IMR-90 (cell line): ENCODE measurements at regions of chr5 and their contacts with region 1.

Region 1: GRCh38 chr5:8829323-8830029 is 716.4 kb downstream of the SEMA5A start:
- DNase-seq: peak; percentile 100
- ATAC-seq: peak; percentile 89
- H3K4me3 ChIP-seq: no peak overlapping the region
- H3K27ac ChIP-seq: peak overlapping the region; percentile 75
- H3K4me1 ChIP-seq: peaks cover 25% of the 10 kb centered on the region
- H3K27me3 ChIP-seq: no peaks in the 10 kb centered on the region
- CTCF ChIP-seq: no peak
- POLR2A ChIP-seq: no peak
- RAD21 ChIP-seq: 0 out of 2 replicates have a peak, but pooled peaks have one; percentile 1

Region 2: DNA sequence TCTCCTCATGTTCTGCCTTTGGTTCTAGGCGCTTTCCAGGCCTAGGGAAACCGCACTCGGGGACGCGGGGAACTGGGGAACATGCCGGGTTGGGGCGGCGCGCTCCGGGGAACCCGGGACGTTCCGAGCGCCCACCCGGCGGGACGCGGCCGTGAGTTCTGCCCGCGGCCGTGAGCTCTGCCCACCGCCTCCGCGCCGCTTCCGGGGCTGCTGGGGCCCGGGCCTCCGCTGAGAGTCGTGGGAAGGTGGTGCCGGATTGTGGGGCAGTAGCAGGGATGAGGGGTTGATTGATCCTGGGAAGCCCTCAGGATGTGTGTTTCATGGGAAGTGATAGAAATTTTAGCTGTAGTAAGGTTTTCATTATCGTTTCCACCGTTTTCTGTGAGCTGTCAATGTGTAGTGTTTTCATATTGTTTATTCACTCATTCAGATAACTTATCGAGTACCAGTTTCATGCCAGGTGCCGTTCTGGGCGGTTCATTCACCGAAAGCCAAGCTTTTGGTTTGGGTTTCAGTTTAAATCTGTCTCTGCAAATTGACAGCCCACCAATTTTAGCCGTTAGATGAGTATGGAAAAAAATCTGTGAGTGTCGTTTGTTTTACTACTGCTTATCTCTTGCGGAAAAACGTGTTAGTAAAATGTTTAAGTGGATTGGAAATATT is 959.9 kb before region 1 on chr5:
- CTCF ChIA-PET with region 1: no interaction called
- POLR2A ChIA-PET with region 1: no interaction called
- dilution Hi-C with region 1: no loop called
- in situ Hi-C with region 1: no loop called
- intact Hi-C with region 1: loop called (anchors 10 kb)
- DNase-seq: no peak
- ATAC-seq: peak; percentile 47
- H3K4me3 ChIP-seq: peak overlapping the region; percentile 59
- H3K27ac ChIP-seq: peak overlapping the region; percentile 52; the same call in 1 of the 2 replicates
- H3K4me1 ChIP-seq: 0 out of 2 replicates have a peak, but pooled peaks cover 2% of the 10 kb centered on the region
- H3K27me3 ChIP-seq: no peaks in the 10 kb centered on the region
- CTCF ChIP-seq: no peak
- POLR2A ChIP-seq: no peak
- RAD21 ChIP-seq: no peak

Region 3: DNA sequence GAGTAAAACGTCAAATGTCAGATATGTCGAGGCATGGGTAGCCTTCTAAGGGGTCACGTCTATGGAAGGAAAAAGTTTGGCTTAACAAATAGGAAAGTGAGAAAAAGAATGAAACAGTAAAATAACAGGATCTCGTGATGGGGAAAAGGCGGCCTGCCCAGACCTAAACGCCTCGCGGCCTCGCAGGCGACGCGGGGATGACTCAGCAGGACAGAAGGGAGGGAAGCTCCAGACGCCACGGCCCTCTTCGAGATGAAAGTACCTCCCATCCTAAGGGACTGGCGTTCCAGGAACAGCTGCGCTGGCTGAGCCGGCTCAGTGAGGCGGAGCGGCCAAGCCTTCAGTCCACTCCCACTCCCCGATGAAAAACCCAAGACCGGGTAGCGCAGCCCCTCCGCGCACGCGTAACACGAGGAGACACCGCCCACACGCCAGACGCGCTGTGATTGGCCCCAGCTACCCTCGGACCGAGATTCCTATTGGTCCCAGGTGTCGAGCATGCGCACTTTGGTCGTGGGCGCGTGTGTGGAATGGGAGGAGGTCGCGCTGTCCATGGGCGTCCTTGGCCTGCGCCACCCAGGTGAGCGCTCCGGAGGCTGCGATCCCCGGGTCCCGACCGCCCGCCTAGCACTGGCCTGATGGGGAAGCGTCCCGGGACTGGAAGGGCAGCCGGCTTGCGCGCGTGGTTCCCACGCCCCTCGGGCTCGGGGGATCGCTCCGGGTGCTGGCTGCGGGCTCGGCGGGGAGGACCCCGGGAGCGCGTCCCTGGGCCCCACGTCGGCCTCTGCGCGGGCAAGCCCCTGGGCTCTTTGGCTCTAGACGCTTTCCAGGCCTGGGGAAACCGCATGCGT is 372.1 kb before region 1 on chr5:
- CTCF ChIA-PET with region 1: no interaction called
- POLR2A ChIA-PET with region 1: no interaction called
- dilution Hi-C with region 1: no loop called
- in situ Hi-C with region 1: no loop called
- intact Hi-C with region 1: loop called (anchors 5 kb)
- DNase-seq: peak; percentile 98
- ATAC-seq: peak; percentile 98
- H3K4me3 ChIP-seq: peak overlapping the region; percentile 82
- H3K27ac ChIP-seq: peak overlapping the region; percentile 71
- H3K4me1 ChIP-seq: 0 out of 2 replicates have a peak, but pooled peaks cover 2% of the 10 kb centered on the region
- H3K27me3 ChIP-seq: no peaks in the 10 kb centered on the region
- CTCF ChIP-seq: no peak
- POLR2A ChIP-seq: peak; percentile 76
- RAD21 ChIP-seq: no peak

Region 4: DNA sequence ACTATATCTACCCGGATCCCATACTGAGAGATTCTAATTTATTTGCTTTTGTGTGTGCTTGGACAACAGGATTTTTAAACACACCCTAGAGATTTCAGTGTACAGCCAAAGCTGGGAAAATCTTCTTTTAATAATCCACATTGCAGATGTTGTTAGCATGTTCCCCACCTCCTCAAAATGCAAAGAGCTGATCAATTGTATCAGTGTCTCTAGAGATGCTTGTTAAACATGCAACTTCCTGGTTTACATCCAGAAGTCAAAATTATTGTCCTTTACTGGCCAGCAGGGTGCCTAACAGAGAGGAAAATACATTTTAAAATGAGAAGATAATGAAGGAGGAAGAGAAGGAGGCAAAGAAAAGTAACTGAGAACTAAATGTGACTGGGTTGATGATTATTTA is 76.9 kb before region 1 on chr5:
- CTCF ChIA-PET with region 1: no interaction called
- POLR2A ChIA-PET with region 1: no interaction called
- dilution Hi-C with region 1: no loop called
- in situ Hi-C with region 1: no loop called
- intact Hi-C with region 1: no loop called
- DNase-seq: no peak
- ATAC-seq: no peak
- H3K4me3 ChIP-seq: no peak overlapping the region
- H3K27ac ChIP-seq: no peak overlapping the region
- H3K4me1 ChIP-seq: peaks cover 2% of the 10 kb centered on the region; the same call in 1 of the 2 replicates
- H3K27me3 ChIP-seq: no peaks in the 10 kb centered on the region
- CTCF ChIP-seq: no peak
- POLR2A ChIP-seq: no peak
- RAD21 ChIP-seq: no peak

Region 5: GRCh38 chr5:8766448-8766847 is 63.0 kb before region 1 on chr5:
- CTCF ChIA-PET with region 1: no interaction called
- POLR2A ChIA-PET with region 1: no interaction called
- dilution Hi-C with region 1: no loop called
- in situ Hi-C with region 1: no loop called
- intact Hi-C with region 1: loop called (anchors 5 kb)
- DNase-seq: no peak
- ATAC-seq: no peak
- H3K4me3 ChIP-seq: no peak overlapping the region
- H3K27ac ChIP-seq: no peak overlapping the region
- H3K4me1 ChIP-seq: no peaks in the 10 kb centered on the region; the same call in 1 of the 2 replicates
- H3K27me3 ChIP-seq: no peaks in the 10 kb centered on the region
- CTCF ChIP-seq: no peak
- POLR2A ChIP-seq: no peak
- RAD21 ChIP-seq: no peak

Region 6: DNA sequence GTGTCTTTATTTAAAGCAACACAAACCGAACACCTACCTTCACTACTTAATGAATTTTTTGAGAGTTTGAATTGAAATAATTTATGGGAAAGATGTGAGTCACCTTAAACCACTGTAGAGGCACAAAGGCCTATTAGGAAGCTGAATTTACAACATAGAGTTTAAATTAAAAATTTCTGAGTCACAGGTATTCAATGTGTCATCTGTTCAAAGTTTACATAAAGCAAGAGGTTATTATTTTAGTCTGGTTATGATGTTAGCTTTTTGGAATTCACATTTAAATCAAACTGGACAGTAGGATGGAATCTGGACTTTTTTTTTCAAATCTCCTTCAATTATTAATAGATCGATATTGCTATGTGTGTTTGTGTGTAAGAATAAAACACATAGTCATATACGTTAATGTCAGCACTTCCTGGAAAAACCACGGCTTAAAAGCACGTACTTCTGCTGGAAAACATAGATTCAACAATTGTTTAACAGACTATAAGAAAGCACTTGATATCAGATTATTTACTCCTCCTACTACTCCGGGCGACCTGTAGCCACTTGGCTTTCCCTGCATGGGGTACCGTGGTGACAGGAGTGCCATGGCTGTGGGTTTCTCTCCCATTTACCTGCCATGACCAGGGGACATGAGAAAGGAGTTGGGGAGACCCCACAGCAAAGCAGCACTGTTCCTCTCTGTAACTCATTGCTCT is 77.8 kb after region 1 on chr5:
- CTCF ChIA-PET with region 1: no interaction called
- POLR2A ChIA-PET with region 1: no interaction called
- dilution Hi-C with region 1: no loop called
- in situ Hi-C with region 1: no loop called
- intact Hi-C with region 1: loop called (anchors 2 kb)
- DNase-seq: peak; percentile 93
- ATAC-seq: peak; percentile 86
- H3K4me3 ChIP-seq: no peak overlapping the region
- H3K27ac ChIP-seq: peak overlapping the region; percentile 100
- H3K4me1 ChIP-seq: peaks cover 12% of the 10 kb centered on the region
- H3K27me3 ChIP-seq: no peaks in the 10 kb centered on the region
- CTCF ChIP-seq: no peak
- POLR2A ChIP-seq: no peak
- RAD21 ChIP-seq: no peak; the same call in 1 of the 2 replicates